RWPE1 (cell line): ENCODE measurements at regions of chr16 and their contacts with region 1.

Region 1: DNA sequence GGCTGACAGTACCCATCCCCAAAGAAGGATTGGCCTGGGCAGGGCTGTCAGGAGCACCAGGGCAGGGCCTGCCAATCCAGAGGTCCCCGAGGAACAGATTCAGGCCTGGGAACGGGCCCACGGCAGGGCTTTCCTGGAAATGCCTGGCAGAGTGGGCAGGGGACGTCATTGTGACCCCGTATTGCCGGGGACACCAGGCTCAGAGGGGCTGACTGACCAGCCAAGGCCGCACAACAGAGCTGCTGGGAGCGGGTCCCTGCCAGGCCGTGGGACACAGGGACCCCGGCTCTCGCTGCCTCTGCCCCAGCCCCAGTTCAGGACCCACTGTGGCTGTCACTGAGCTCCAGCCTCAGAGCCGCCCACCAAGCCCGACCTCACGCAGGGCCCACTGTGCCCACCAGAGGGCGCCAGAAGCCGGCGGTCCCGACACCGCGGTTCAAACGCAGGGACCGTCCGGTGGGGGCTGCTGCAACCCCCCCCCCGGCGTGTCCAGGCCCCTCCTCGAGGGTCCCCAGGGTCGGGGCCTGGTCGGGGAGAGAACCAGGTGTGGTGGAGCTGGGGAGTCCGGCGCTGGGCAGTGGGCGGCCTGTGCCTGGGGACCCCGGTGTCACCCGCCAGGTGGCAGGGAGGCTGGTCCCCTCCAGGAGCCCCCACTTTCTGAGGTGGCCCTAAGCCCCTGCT is 15.2 kb upstream of the SSTR5 start:
- DNase-seq: peak; percentile 47
- H3K27ac ChIP-seq: no peak overlapping the region
- CTCF ChIP-seq: peak; percentile 93

Region 2: DNA sequence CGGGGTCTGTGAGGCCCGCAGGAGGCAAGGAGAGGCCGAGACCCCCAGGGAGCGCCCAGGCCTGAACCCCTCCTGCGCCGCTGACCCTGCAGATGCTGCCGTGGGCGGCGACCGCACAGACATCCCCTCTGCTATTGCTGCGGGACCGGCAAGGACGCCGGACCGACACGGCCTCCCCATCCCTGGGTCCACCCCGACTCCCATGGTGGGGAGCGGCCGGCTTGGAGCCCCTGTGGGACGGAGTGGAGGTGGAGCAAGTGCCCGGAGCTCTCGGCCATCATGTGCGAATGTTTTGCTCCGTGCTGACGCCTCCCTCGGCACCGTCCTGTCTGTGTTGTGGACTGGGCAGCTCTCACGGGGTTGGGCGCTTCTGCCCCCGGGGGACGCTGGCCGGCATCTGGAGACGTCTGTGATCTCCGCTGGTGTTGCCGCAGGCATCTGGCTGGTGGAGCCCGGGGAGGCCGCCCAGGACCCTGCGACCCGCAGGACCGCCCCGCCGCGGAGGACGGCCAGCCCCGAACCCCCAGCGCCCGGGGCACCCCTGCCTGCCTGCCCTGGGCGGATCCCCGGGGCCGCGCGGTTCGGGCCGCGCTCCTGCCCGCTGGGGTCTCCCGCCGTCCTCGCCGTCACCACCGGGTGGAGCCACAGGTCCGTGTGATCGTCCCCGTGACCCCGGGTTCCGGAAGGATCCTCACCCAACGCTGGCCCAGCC is 244.0 kb before region 1 on chr16:
- CTCF ChIA-PET with region 1: interaction called, 10 read pairs
- POLR2A ChIA-PET with region 1: no interaction called
- DNase-seq: peak; percentile 68
- H3K27ac ChIP-seq: no peak overlapping the region
- CTCF ChIP-seq: peak; percentile 64

Region 3: DNA sequence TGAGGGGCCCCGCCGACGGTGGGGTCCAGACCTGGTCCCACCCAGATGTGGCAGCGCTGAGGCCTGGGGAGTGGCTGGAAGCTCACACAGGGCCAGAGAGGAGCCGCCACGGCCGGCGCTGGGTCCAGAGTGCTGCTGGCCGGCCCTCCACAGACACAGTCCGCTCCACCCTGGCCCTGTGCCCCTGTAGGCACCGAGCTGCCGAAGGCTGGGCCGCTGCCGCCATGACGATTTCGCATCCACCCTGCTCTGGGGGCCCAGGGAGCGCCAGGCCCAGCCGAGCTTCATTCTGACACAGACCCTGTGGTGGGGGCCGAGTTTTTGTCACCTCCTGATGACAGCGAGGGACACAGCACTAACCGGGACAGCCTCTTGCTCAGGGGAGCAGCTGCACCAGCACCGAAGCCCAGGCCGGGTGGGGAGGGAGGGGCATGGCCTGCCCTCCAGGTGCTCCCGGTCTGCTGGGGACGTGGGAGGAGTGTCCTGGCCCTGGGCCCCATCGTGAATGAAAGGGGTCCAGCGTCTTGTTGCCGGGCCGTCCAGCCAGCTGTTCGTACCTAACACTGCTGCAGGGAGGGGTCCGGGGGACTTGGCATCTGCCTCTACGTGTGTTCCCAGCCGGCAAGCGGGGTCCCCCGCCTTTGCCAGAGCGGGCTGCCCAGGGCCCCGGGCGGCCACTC is 11.9 kb before region 1 on chr16:
- CTCF ChIA-PET with region 1: interaction called, 11 read pairs
- POLR2A ChIA-PET with region 1: no interaction called
- DNase-seq: no peak
- H3K27ac ChIP-seq: no peak overlapping the region
- CTCF ChIP-seq: no peak